PC-9 (cell line): ENCODE measurements at regions of chr1 and their contacts with region 1.

Region 1: DNA sequence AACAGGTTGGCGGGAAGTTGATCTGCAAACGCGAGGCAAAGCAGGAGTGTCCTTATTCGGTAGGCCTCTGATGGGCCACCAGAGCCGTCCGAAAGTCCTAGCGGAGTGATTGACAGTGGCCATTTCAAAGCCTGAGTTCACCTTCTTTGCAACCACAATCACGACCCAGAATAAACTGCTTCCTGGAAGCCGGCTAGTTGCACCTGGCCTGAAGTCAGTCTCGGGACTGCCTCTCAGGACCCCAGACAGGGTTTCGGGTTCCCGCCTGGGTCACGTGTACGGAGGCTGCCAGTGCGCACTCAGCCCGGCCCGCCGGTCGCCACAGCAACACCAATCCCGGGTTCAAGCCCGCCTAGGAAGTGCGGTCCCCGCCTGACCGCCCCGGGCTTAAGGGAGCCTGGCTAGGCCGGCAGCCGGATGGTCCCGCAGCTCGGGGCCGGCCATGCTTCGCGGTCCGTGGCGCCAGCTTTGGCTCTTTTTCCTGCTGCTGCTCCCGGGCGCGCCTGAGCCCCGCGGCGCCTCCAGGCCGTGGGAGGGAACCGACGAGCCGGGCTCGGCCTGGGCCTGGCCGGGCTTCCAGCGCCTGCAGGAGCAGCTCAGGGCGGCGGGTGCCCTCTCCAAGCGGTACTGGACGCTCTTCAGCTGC is at the start of gene TOR3A:
- DNase-seq: peak; percentile 87 to 96
- H3K4me3 ChIP-seq: peak within 1 kb of the TSS; percentile 79
- H3K27ac ChIP-seq: peak within 1 kb of the TSS; percentile 76
- H3K4me1 ChIP-seq: peaks cover 28% of the 10 kb centered on the region
- H3K27me3 ChIP-seq: no peaks in the 10 kb centered on the region
- CTCF ChIP-seq: no peak
- total RNA-seq, gene TOR3A: 31.6 and 35.6 TPM in 2 replicates

Region 2: GRCh38 chr1:179025125-179025974 is 56.5 kb before region 1 on chr1 and contains the start of gene FAM20B:
- CTCF ChIA-PET with region 1: no interaction called
- POLR2A ChIA-PET with region 1: no interaction called
- intact Hi-C with region 1: loop called (anchors 5 kb)
- DNase-seq: peak; percentile 81 to 94
- H3K4me3 ChIP-seq: peak within 1 kb of the TSS; percentile 93
- H3K27ac ChIP-seq: peak within 1 kb of the TSS; percentile 98
- H3K4me1 ChIP-seq: peaks cover 37% of the 10 kb centered on the region
- H3K27me3 ChIP-seq: no peaks in the 10 kb centered on the region
- CTCF ChIP-seq: no peak
- total RNA-seq, gene FAM20B: 68.1 and 80.5 TPM in 2 replicates

Region 3: DNA sequence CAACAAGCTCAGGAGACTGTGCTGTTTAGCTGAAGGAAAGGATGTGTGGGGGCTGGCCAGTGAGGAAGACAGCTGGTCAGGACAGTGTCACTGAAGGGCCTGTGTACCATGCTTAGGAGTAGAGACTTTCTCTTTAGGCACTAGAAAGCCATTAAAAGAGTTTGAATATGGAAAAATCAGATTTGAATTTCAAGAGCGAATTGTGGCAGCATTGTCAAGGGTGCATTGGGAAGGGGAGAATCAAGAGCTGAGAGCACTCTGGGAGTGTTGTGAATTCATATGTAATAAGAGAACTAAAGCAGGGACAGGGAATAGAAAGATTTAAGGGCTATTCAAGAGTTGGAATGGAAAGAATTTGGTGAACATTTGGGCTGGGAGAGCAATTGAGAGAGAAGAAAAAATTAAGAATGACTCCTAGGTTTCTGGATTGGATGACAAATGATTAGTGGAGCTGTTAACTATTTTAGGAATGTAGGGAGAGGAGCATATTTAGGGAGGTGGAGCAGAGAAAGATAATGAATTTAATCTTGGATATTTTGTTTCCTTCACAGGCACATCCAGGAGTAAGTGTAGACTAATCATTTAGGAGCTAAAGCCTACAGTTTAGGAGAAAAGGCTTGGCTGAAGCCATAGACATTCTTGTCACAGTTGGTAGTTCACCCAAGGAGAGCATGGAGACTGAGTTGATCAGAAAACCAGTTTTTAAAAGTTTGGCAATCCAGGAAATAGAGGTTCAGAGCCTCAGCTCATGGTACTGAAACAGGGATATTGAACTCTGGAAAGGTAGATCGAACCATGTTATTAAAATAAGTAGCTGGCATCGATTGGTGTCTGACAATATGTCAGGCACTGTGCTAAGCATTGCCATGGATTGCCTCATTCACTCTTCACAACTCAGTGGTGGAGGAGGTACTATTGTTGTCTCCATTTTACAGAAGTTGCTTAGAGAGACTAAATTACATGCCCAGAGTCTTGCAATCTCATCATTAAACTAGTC is 23.0 kb before region 1 on chr1:
- CTCF ChIA-PET with region 1: no interaction called
- POLR2A ChIA-PET with region 1: interaction called, 15 read pairs
- intact Hi-C with region 1: no loop called
- DNase-seq: peak in 1 of 2 experiments; percentile 67
- H3K4me3 ChIP-seq: no peak overlapping the region
- H3K27ac ChIP-seq: peak overlapping the region; percentile 96
- H3K4me1 ChIP-seq: peaks cover 54% of the 10 kb centered on the region
- H3K27me3 ChIP-seq: no peaks in the 10 kb centered on the region
- CTCF ChIP-seq: no peak

Region 4: DNA sequence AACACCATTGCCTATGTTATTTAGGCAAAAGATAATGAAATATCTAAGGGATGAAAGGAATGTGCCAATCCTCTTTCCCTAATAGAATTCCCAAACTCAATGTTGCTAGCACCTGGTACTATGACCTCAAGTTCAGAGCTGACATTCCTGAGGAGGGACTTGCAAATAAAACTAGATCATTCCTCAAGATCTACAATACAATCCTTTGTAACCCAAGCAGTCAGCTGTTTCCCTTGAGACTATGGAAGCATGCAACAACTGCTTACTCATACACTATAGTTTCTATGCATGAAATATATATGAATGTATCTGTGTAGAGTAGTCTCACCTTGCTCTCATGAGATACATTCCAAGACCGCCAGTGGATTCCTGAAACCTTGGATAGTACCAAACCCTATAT is 82.7 kb after region 1 on chr1:
- CTCF ChIA-PET with region 1: interaction called, 10 read pairs
- POLR2A ChIA-PET with region 1: no interaction called
- intact Hi-C with region 1: no loop called
- DNase-seq: peak in 1 of 2 experiments; percentile 83
- H3K4me3 ChIP-seq: no peak overlapping the region
- H3K27ac ChIP-seq: peak overlapping the region; percentile 71
- H3K4me1 ChIP-seq: peaks cover 20% of the 10 kb centered on the region
- H3K27me3 ChIP-seq: no peaks in the 10 kb centered on the region
- CTCF ChIP-seq: no peak